ENCODE measurements at regions of chr13 and their contacts with region 1.

Region 1: GRCh38 chr13:43085545-43085944 is 62.2 kb downstream of the DNAJC15 start:
- DNase-seq: no peak
- H3K4me3 ChIP-seq: no peak overlapping the region
- H3K27ac ChIP-seq: no peak overlapping the region
- H3K4me1 ChIP-seq: no peaks in the 10 kb centered on the region
- H3K27me3 ChIP-seq: no peaks in the 10 kb centered on the region
- CTCF ChIP-seq: peak; percentile 39 to 68 (median 46)
- EP300 ChIP-seq: no peak
- POLR2A ChIP-seq: no peak

Region 2: DNA sequence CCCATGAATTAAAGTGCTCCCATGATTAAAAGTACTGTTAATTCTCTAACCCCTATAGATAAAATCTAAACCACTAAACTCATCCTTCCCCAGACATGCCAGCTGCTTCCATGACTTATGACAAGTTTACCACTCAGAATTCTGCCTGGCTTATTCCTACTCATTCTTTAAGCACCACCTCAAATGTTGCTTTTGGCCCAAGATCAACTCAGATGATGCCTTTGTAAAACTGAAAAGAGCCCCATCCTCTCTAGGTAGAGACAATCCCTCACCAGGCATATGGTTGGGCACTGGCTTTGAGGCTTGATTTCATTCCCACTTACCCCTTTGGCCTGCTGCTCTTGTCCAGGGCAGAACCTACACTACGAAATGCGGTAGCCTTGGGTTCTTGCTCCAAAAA is 187.8 kb after region 1 on chr13:
- intact Hi-C with region 1: no loop called
- DNase-seq: no peak
- H3K4me3 ChIP-seq: no peak overlapping the region
- H3K27ac ChIP-seq: no peak overlapping the region
- H3K4me1 ChIP-seq: peaks cover 2% of the 10 kb centered on the region
- H3K27me3 ChIP-seq: no peaks in the 10 kb centered on the region
- CTCF ChIP-seq: no peak
- EP300 ChIP-seq: no peak
- POLR2A ChIP-seq: no peak

Region 3: DNA sequence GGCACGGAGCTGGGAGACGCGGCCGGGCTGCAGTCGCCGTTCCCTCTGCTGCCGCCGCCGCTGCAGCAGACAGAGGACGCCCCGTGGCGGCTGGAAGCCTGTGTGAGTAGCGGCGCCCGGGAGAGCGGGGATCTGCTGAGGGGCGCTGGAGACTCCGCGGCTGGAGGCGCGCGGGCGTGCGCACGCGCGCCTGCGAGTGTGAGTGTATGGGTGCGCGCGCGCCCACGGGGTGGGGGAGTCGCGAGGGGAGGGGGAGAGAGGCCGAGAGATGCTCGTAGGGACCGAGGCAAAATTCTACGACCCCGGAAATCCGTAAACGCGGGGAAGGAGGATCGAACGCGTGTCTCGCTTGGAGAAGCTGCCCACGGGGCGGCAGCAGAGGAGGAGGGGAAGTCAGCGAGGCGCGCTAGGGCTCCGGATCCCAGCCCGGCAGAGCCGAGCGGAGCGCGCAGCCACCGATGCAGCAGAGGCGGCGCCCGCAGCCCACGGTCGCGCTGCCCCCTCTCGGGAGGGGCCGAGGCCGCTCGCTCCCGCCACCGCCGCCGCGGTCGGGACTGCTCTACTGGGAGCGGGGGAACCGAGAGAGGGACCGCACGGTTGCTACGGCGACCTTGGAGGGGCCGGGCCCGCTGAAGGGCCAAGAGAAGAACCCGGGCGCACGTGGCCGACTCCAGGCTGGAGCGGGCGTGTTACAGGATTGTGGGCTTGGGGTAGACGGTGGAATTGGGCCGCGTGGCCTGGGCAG is 701.4 kb after region 1 on chr13 and contains the start of gene ENOX1:
- intact Hi-C with region 1: loop called in 1 of 4 experiments (anchors 5 kb)
- DNase-seq: peak; percentile 76 to 88 (median 80)
- H3K4me3 ChIP-seq: peak within 1 kb of the TSS; percentile 85
- H3K27ac ChIP-seq: peak within 1 kb of the TSS; percentile 42 to 73
- H3K4me1 ChIP-seq: no peaks in the 10 kb centered on the region
- H3K27me3 ChIP-seq: no peaks in the 10 kb centered on the region
- CTCF ChIP-seq: peak; percentile 13 to 47 (median 13)
- EP300 ChIP-seq: no peak
- POLR2A ChIP-seq: no peak
- total RNA-seq, gene ENOX1: 3.6 to 17.5 (median 7.8) TPM

Region 4: GRCh38 chr13:43804461-43805070 is 719.0 kb after region 1 on chr13:
- intact Hi-C with region 1: loop called in 3 of 4 experiments (anchors 5 kb)
- DNase-seq: no peak
- H3K4me3 ChIP-seq: no peak overlapping the region
- H3K27ac ChIP-seq: no peak overlapping the region
- H3K4me1 ChIP-seq: no peaks in the 10 kb centered on the region
- H3K27me3 ChIP-seq: no peaks in the 10 kb centered on the region
- CTCF ChIP-seq: peak; percentile 14 to 79 (median 59)
- EP300 ChIP-seq: no peak
- POLR2A ChIP-seq: no peak

Region 5: GRCh38 chr13:43878892-43879754 is 793.6 kb after region 1 on chr13 and contains the start of gene CCDC122:
- intact Hi-C with region 1: loop called in 1 of 4 experiments (anchors 10 kb)
- DNase-seq: peak; percentile 75 to 89 (median 77)
- H3K4me3 ChIP-seq: peak within 1 kb of the TSS; percentile 70
- H3K27ac ChIP-seq: peak within 1 kb of the TSS; percentile 80 to 90
- H3K4me1 ChIP-seq: peaks cover 1% of the 10 kb centered on the region
- H3K27me3 ChIP-seq: no peaks in the 10 kb centered on the region
- CTCF ChIP-seq: peak in 1 of 3 donors; percentile 7
- EP300 ChIP-seq: no peak
- POLR2A ChIP-seq: peak; percentile 17
- total RNA-seq, gene CCDC122: 4.2 to 15.2 (median 6.6) TPM